Endothelial cell of umbilical vein (primary cell): ENCODE measurements at regions of chr17 and their contacts with region 1.

Region 1: DNA sequence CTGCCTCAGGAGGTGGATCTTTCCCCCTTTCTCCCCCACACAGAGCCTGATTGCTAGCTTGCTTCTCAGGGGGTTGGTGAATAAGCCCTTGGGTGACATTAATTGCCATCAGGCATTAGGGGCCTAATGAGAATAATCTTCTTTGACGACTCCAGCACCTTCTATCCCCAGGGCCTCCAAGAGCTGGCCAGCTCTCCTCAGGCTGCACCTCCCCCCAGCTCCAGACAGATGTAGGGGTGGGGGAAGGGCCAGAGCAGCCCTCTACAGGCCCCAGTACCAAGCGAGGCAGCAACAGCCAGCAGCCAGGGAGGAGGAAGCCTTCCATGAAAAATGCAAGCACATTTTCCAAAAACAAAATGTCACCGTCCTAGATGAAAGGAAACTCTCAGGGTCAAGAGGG is 1.4 kb upstream of the TMEM132E start:
- DNase-seq: no peak
- H3K4me3 ChIP-seq: no peak overlapping the region
- H3K27ac ChIP-seq: no peak overlapping the region
- H3K4me1 ChIP-seq: no peaks in the 10 kb centered on the region
- H3K27me3 ChIP-seq: peaks cover 56 to 62% of the 10 kb centered on the region in 2 experiments
- CTCF ChIP-seq: no peak
- POLR2A ChIP-seq: no peak

Region 2: DNA sequence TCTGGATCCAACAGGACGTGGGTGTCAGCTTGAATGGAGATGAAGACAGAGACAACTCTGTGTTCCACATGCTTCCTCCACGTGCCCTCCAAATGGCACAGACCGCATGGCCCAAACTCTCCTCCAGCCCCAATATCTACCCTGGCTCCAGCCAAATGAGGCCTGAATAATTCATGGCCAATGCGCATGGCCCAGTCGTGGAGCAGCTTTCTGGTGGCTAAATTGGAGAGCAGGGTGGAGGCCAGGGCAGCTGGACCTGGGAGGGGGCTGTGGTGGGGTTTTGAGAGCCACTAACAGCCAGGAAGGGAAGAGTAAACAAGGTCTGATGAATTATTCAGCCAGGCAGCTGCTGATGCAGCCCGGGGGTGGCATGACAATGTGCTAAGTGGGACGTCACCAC is 95.3 kb before region 1 on chr17:
- CTCF ChIA-PET with region 1: no interaction called
- POLR2A ChIA-PET with region 1: no interaction called
- dilution Hi-C with region 1: no loop called
- intact Hi-C with region 1: no loop called
- DNase-seq: no peak
- H3K4me3 ChIP-seq: no peak overlapping the region
- H3K27ac ChIP-seq: no peak overlapping the region
- H3K4me1 ChIP-seq: no peaks in the 10 kb centered on the region
- H3K27me3 ChIP-seq: no peaks in the 10 kb centered on the region
- CTCF ChIP-seq: no peak
- POLR2A ChIP-seq: no peak

Region 3: GRCh38 chr17:34565713-34566112 is 12.3 kb before region 1 on chr17:
- CTCF ChIA-PET with region 1: interaction called, 3 read pairs
- POLR2A ChIA-PET with region 1: no interaction called
- dilution Hi-C with region 1: no loop called
- intact Hi-C with region 1: loop called (anchors 1 kb)
- DNase-seq: no peak
- H3K4me3 ChIP-seq: no peak overlapping the region
- H3K27ac ChIP-seq: no peak overlapping the region
- H3K4me1 ChIP-seq: no peaks in the 10 kb centered on the region
- H3K27me3 ChIP-seq: peaks cover 0 to 1% of the 10 kb centered on the region in 2 experiments
- CTCF ChIP-seq: no peak
- POLR2A ChIP-seq: no peak